Activated CD8-positive, alpha-beta memory T cell treated with anti-CD3 and anti-CD28 coated beads, Interleukin-2, amount 10 ng/mL, durations not matched to agents 7 days and 5 days (primary cell): ENCODE measurements at regions of chr1 and their contacts with region 1.

Region 1: GRCh38 chr1:201895913-201896807 is 7.5 kb downstream of the SHISA4 start:
- DNase-seq: peak; percentile 92
- ATAC-seq: peak; percentile 97
- H3K4me3 Mint-ChIP-seq: peak overlapping the region; percentile 25
- H3K27ac Mint-ChIP-seq: peak overlapping the region; percentile 80
- H3K4me1 Mint-ChIP-seq: peaks cover 12% of the 10 kb centered on the region
- H3K27me3 Mint-ChIP-seq: peaks cover 19% of the 10 kb centered on the region

Region 2: GRCh38 chr1:201877877-201878401 is 18.2 kb before region 1 on chr1:
- CTCF ChIA-PET with region 1: interaction called, 46 read pairs
- DNase-seq: peak; percentile 44
- ATAC-seq: peak; percentile 80
- H3K4me3 Mint-ChIP-seq: no peak overlapping the region
- H3K27ac Mint-ChIP-seq: no peak overlapping the region
- H3K4me1 Mint-ChIP-seq: no peaks in the 10 kb centered on the region
- H3K27me3 Mint-ChIP-seq: no peaks in the 10 kb centered on the region

Region 3: GRCh38 chr1:201946224-201946908 is 50.2 kb after region 1 on chr1 and contains the start of gene LMOD1:
- CTCF ChIA-PET with region 1: interaction called, 21 read pairs
- DNase-seq: no peak
- ATAC-seq: no peak
- H3K4me3 Mint-ChIP-seq: no peak within 1 kb of the TSS
- H3K27ac Mint-ChIP-seq: no peak within 1 kb of the TSS
- H3K4me1 Mint-ChIP-seq: peaks cover 13% of the 10 kb centered on the region
- H3K27me3 Mint-ChIP-seq: peaks cover 56% of the 10 kb centered on the region
- total RNA-seq, gene LMOD1: not detected

Region 4: GRCh38 chr1:201964261-201964660 is 68.1 kb after region 1 on chr1:
- CTCF ChIA-PET with region 1: interaction called, 42 read pairs
- DNase-seq: no peak
- ATAC-seq: no peak
- H3K4me3 Mint-ChIP-seq: no peak overlapping the region
- H3K27ac Mint-ChIP-seq: no peak overlapping the region
- H3K4me1 Mint-ChIP-seq: peaks cover 3% of the 10 kb centered on the region
- H3K27me3 Mint-ChIP-seq: no peaks in the 10 kb centered on the region

Region 5: GRCh38 chr1:201982623-201983379 is 86.6 kb after region 1 on chr1 and contains the start of gene RNPEP:
- CTCF ChIA-PET with region 1: interaction called, 21 read pairs
- DNase-seq: peak; percentile 68
- ATAC-seq: peak; percentile 86
- H3K4me3 Mint-ChIP-seq: peak within 1 kb of the TSS; percentile 94
- H3K27ac Mint-ChIP-seq: peak within 1 kb of the TSS; percentile 88
- H3K4me1 Mint-ChIP-seq: peaks cover 19% of the 10 kb centered on the region
- H3K27me3 Mint-ChIP-seq: peaks cover 9% of the 10 kb centered on the region
- total RNA-seq, gene RNPEP: 38.3 to 40.4 TPM

Region 6: DNA sequence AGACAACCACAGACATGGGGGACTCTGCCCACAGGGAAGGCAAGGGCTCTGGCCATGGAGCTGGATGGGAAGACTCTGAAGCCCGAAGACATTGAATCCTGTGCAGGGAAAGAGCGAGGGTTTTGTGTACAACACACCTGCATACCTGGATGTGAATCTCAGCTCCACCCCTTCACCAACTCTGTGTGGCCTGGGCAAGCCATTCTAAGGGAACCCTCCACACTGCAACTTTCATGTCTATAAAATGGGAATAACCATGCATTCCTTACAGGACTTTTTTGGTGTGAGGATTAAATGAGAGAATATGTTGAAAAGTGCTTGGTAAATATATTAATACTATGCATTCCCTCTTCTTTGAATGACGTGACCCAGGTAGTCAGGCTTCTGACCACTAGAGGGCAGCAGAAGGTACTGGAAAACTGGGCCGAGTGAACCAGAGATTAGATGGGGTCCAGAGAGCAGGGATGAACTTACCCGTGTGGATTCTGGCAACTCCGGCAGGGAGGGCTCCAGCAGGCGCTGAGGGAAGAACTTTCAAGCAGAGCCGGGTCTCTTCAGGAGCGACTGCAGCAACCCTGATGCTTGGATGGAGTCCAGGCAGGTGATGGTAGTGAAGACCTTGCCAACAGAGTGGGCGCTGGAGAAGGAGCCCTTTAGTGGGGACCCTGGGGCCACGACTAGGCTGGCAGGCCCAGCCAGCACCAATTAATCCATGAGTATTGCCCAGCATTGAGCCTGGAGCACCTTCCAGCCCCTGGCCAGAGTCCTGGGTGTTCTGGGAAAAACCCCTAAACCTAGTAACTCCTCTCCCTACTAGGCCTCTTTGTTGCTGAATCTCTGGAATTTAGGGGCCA is 113.4 kb after region 1 on chr1:
- CTCF ChIA-PET with region 1: interaction called, 11 read pairs
- DNase-seq: peak; percentile 70
- ATAC-seq: peak; percentile 77
- H3K4me3 Mint-ChIP-seq: no peak overlapping the region
- H3K27ac Mint-ChIP-seq: no peak overlapping the region
- H3K4me1 Mint-ChIP-seq: no peaks in the 10 kb centered on the region
- H3K27me3 Mint-ChIP-seq: no peaks in the 10 kb centered on the region